ENCODE measurements at regions of chr1 and their contacts with region 1.

Region 1: GRCh38 chr1:147084273-147085096 is 87.8 kb downstream of the PRKAB2 start:
- DNase-seq: peak; percentile 78
- ATAC-seq: peak; percentile 76
- H3K4me3 Mint-ChIP-seq: peak overlapping the region; percentile 95
- H3K27ac Mint-ChIP-seq: peak overlapping the region; percentile 100
- H3K4me1 Mint-ChIP-seq: peaks cover 30% of the 10 kb centered on the region
- H3K27me3 Mint-ChIP-seq: peaks cover 68% of the 10 kb centered on the region

Region 2: GRCh38 chr1:147172168-147172992 is 87.9 kb after region 1 on chr1 and contains the start of gene PRKAB2:
- POLR2A ChIA-PET with region 1: interaction called, 11 read pairs
- DNase-seq: peak; percentile 95
- ATAC-seq: peak; percentile 87
- H3K4me3 Mint-ChIP-seq: peak within 1 kb of the TSS; percentile 99
- H3K27ac Mint-ChIP-seq: peak within 1 kb of the TSS; percentile 97
- H3K4me1 Mint-ChIP-seq: peaks cover 26% of the 10 kb centered on the region
- H3K27me3 Mint-ChIP-seq: no peaks in the 10 kb centered on the region
- total RNA-seq, gene PRKAB2: 12.6 to 14.0 TPM

Measured in activated naive CD8-positive, alpha-beta T cell treated with anti-CD3 and anti-CD28 coated beads, Interleukin-2, amount 10 ng/mL, durations not matched to agents 7 days and 5 days (primary cell).